Posterior cingulate gyrus (tissue), 11 donors: ENCODE measurements at regions of chr9 and their contacts with region 1.

Region 1: GRCh38 chr9:120842690-120843499 is at the start of gene PSMD5:
- DNase-seq: peak; percentile 83 to 99 (median 95)

Region 2: GRCh38 chr9:120715389-120715924 is 127.4 kb before region 1 on chr9:
- intact Hi-C with region 1: no loop called
- DNase-seq: peak in 8 of 10 donors; percentile 20 to 89 (median 50)

Region 3: GRCh38 chr9:120792898-120793765 is 49.8 kb before region 1 on chr9 and contains the start of gene FBXW2:
- intact Hi-C with region 1: loop called (anchors 5 kb)
- DNase-seq: peak; percentile 87 to 99 (median 92)

Region 4: DNA sequence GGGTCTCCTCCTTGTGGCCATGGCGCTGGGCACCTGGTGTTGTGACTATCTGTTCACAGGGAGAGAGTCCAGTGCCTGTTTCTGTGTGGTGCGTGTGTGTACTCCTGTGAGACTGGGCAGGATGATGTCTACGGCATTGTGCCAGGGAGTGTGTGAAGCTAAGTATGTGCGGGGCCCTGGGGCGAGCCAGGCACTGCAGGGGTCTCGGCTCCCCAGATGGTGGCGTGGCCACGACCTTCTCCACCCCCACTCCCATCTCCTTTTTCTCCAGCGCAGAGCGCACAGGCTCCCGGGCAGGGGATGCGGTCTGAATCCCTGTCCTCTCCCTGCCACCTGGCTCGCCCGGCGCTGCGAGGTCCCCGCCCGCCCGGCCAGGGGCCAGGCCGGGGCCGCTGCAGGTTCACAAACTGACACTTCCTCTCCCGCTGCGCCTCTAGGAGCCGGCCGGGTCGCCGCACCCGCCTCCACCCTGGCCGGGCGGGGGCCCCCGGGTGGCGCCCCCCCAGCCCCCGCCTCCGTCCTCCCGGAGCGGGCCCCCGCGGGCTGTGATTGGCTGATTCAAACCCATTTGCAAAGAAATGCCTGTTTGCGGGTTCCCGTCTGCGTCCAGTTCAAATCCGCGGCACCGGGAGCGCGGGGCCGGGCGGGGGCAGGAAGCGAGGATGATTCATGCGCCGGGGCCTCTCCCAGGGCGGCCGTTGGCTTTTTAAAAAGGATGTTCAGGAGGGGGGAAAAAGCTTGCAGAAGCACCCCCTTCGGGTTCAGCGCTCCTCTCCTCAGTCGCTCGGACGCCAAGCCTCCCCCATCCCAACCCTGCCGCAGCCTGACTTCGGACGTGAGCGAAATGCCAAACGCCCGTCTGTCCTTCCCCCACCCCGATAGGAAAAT is 33.3 kb after region 1 on chr9:
- intact Hi-C with region 1: loop called (anchors 5 kb)
- DNase-seq: peak; percentile 49 to 96 (median 76)

Region 5: DNA sequence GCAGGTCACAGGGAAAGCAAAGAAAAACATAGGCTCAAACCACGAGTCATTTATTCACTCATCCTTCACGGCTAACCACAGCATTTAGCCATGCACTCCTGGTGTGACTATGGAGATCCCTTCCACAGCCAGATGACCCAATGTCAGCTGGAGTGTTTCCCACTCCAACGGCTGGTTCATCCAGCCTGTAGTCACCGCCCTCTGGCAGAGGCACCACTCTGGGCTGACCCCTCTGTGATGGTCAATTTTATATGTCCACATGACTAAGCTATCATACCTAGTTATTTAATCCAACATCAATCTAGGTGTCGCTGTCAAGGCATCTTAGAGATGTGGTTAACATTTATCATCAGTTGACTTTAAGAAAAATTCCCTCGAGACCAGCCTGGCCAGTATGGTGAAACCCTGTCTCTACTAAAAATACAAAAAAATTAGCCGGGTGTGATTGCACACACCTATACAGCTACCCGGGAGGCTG is 43.6 kb after region 1 on chr9:
- intact Hi-C with region 1: no loop called
- DNase-seq: no peak

Region 6: DNA sequence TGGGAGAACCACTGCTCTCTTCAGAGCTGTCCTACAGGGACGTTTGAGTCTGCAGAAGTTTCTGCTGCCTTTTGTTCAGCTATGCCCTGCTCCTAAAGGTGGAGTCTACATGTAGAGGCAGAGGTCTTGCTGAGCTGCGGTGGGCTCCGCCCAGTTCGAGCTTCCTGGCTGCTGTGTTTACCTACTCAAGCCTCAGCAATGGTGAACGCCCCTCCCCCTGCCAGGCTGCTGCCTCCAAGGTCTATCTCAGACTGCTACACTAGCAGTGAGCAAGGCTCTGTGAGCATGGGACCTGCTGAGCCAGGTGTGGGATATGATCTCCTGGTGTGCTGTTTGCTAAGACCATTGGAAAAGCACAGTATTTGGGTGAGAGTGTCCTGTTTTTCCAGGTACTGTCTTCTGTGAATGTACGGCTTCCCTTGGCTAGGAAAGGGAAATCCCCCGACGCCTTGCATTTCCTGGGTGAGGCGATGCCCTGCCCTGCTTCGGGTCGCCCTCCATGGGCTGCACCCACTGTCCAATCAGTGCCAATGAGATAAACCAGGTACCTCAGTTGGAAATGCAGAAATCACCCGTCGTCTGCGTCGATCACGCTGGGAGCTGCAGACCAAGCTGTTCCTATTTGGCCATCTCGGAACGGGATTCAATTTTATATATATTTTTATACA is 290.4 kb after region 1 on chr9:
- intact Hi-C with region 1: no loop called
- DNase-seq: no peak